Naive thymus-derived CD4-positive, alpha-beta T cell (primary cell): ENCODE measurements at regions of chr6 and their contacts with region 1.

Region 1: DNA sequence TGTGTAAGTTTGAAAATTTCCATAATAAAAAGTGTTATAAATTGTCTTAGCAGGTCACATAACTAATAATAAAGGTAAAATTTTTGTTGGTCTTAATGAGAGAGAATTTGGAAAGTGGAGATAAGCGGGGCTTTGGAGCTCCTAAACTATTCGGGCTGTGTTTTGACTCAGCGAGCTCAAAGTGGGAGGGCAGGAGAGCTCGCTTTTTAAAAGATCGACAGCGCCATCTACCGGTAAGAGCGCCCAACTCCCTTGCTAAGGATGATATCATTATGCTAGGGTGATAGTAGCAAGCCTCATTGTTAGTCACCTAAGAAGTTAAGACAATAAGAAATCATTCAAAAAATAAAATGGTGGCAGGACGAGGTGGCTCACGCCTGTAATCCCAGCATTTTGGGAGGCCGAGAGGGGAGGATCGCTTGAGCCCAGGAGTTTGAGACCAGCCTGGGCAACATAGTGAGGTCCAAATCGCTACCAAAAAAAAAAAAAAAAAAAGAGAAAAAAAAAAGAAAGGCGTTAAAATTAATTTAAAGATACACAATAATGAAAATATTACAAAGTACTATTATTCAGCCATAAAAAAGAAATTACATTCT is 24.8 kb downstream of the C6orf15 start:
- DNase-seq: peak; percentile 66 to 89 (median 80)
- ATAC-seq: peak; percentile 100
- H3K4me3 ChIP-seq: no peak overlapping the region
- H3K4me3 Mint-ChIP-seq: no peak overlapping the region
- H3K27ac ChIP-seq: no peak overlapping the region
- H3K27ac Mint-ChIP-seq: peak overlapping the region in 4 of 9 donors; percentile 9 to 73 (median 46)
- H3K4me1 ChIP-seq: no peaks in the 10 kb centered on the region
- H3K4me1 Mint-ChIP-seq: peaks cover 6 to 14% (median 10%) of the 10 kb centered on the region in 7 donors
- H3K27me3 ChIP-seq: no peaks in the 10 kb centered on the region
- H3K27me3 Mint-ChIP-seq: peaks cover 0 to 21% (median 0%) of the 10 kb centered on the region in 5 donors

Region 2: GRCh38 chr6:30678964-30679726 is 408.4 kb before region 1 on chr6:
- CTCF ChIA-PET with region 1: interaction called, 3 read pairs
- POLR2A ChIA-PET with region 1: no interaction called
- intact Hi-C with region 1: loop called (anchors 1 to 5 kb)
- DNase-seq: peak; percentile 86 to 97 (median 92)
- ATAC-seq: peak; percentile 65
- H3K4me3 ChIP-seq: peak overlapping the region; percentile 98
- H3K4me3 Mint-ChIP-seq: peak overlapping the region; percentile 90 to 100 (median 97)
- H3K27ac ChIP-seq: peak overlapping the region; percentile 95
- H3K27ac Mint-ChIP-seq: peak overlapping the region; percentile 85 to 99 (median 97)
- H3K4me1 ChIP-seq: peaks cover 5 to 24% of the 10 kb centered on the region in 2 donors
- H3K4me1 Mint-ChIP-seq: peaks cover 20 to 47% (median 38%) of the 10 kb centered on the region in 7 donors
- H3K27me3 ChIP-seq: no peaks in the 10 kb centered on the region
- H3K27me3 Mint-ChIP-seq: no peaks in the 10 kb centered on the region

Region 3: DNA sequence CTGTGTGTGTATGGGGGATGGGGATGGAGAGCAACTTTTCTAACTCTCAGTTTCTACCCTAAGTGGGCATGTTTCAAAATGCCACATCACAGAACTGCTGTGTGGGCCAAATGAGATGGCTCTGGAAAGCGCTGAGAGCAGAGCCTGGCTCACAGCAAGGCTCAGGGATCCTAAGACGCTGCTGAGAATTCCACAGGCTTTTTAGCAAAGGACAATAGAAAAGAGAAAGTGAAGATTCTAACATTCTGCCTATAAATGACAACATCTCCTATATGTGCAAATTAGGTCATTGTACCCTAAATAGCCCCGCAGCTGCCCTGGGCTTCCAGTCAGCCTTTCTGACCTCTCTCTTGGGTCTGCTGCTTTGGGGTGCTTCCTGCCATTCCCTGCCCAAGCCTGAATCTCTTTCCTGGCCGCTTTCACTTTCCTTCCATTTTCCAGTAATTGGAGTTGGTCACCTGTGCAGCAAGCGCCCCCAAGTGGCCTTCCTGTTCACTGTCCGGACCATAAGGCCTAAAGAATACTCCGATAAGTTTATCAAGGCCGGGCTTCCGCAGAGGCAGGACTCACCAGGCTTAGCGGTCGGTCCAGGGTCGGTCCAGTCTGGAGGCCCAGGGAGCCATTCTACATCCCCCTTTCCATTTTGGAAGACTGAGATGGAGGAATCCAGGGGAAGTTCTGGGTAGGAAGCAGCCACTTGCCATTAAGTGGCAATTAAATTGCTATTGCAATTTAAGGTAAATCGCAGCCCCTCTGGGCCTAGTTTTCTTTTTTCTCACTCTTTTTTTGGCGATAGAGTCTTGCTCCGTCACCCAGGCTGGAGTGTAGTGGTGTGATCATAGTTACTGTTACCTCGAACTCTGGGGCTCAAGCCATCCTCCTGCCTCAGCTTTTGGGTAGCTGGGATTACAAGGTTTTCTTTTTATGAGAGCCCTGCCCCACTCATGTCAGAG is 209.9 kb before region 1 on chr6:
- CTCF ChIA-PET with region 1: no interaction called
- POLR2A ChIA-PET with region 1: no interaction called
- intact Hi-C with region 1: loop called in 1 of 2 experiments (anchors 2 kb)
- DNase-seq: peak; percentile 52 to 72 (median 63)
- ATAC-seq: peak; percentile 93
- H3K4me3 ChIP-seq: peak overlapping the region; percentile 40
- H3K4me3 Mint-ChIP-seq: peak overlapping the region; percentile 69 to 90 (median 86)
- H3K27ac ChIP-seq: peak overlapping the region; percentile 50
- H3K27ac Mint-ChIP-seq: peak overlapping the region; percentile 44 to 91 (median 84)
- H3K4me1 ChIP-seq: peaks cover 8 to 15% of the 10 kb centered on the region in 2 donors
- H3K4me1 Mint-ChIP-seq: peaks cover 10 to 31% (median 19%) of the 10 kb centered on the region in 7 donors
- H3K27me3 ChIP-seq: no peaks in the 10 kb centered on the region
- H3K27me3 Mint-ChIP-seq: peaks cover 0 to 7% (median 0%) of the 10 kb centered on the region in 5 donors

Region 4: GRCh38 chr6:31058128-31058894 is 29.3 kb before region 1 on chr6:
- CTCF ChIA-PET with region 1: interaction called, 5 read pairs
- POLR2A ChIA-PET with region 1: no interaction called
- intact Hi-C with region 1: loop called in 1 of 2 experiments (anchors 1 kb)
- DNase-seq: peak in 1 of 9 donors; percentile 1
- ATAC-seq: no peak
- H3K4me3 ChIP-seq: no peak overlapping the region
- H3K4me3 Mint-ChIP-seq: no peak overlapping the region
- H3K27ac ChIP-seq: no peak overlapping the region
- H3K27ac Mint-ChIP-seq: no peak overlapping the region
- H3K4me1 ChIP-seq: no peaks in the 10 kb centered on the region
- H3K4me1 Mint-ChIP-seq: no peaks in the 10 kb centered on the region
- H3K27me3 ChIP-seq: peaks cover 3 to 4% of the 10 kb centered on the region in 2 donors
- H3K27me3 Mint-ChIP-seq: peaks cover 10 to 38% (median 15%) of the 10 kb centered on the region in 5 donors

Region 5: DNA sequence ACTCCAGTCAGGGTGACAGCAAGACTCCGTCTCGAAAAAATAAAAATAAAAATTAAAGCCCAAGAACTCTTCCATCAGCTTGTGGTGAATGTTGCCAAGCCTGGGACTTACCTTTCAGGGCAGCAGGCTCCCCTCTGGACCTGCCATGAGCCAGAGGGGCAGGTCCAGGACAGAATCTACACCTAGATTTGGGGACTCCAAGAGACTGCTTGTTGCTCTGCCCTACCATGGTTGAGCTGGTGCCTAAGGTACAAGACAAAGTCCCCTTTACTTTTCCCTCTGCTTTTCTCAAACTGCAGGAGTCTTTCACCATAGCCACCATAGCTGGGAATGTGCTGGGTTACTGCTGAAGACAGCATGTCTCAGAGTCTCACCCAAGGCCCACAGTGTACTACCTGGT is 15.5 kb after region 1 on chr6:
- CTCF ChIA-PET with region 1: interaction called, 5 read pairs
- POLR2A ChIA-PET with region 1: interaction called, 5 read pairs
- intact Hi-C with region 1: loop called in 1 of 2 experiments (anchors 2 kb)
- DNase-seq: no peak
- ATAC-seq: no peak
- H3K4me3 ChIP-seq: no peak overlapping the region
- H3K4me3 Mint-ChIP-seq: no peak overlapping the region
- H3K27ac ChIP-seq: no peak overlapping the region
- H3K27ac Mint-ChIP-seq: no peak overlapping the region
- H3K4me1 ChIP-seq: no peaks in the 10 kb centered on the region
- H3K4me1 Mint-ChIP-seq: peaks cover 0 to 8% (median 4%) of the 10 kb centered on the region in 7 donors
- H3K27me3 ChIP-seq: no peaks in the 10 kb centered on the region
- H3K27me3 Mint-ChIP-seq: peaks cover 0 to 16% (median 0%) of the 10 kb centered on the region in 5 donors

Region 6: GRCh38 chr6:31128093-31128676 is 40.6 kb after region 1 on chr6:
- CTCF ChIA-PET with region 1: interaction called, 30 read pairs
- POLR2A ChIA-PET with region 1: interaction called, 3 read pairs
- intact Hi-C with region 1: loop called in 1 of 2 experiments (anchors 2 kb)
- DNase-seq: peak; percentile 29 to 79 (median 55)
- ATAC-seq: peak; percentile 87
- H3K4me3 ChIP-seq: no peak overlapping the region
- H3K4me3 Mint-ChIP-seq: no peak overlapping the region
- H3K27ac ChIP-seq: no peak overlapping the region
- H3K27ac Mint-ChIP-seq: peak overlapping the region in 2 of 9 donors; percentile 0 to 1
- H3K4me1 ChIP-seq: no peaks in the 10 kb centered on the region
- H3K4me1 Mint-ChIP-seq: peaks cover 5 to 8% (median 6%) of the 10 kb centered on the region in 7 donors
- H3K27me3 ChIP-seq: no peaks in the 10 kb centered on the region
- H3K27me3 Mint-ChIP-seq: peaks cover 0 to 17% (median 5%) of the 10 kb centered on the region in 5 donors